ENCODE measurements at regions of chr22 and their contacts with region 1.

Region 1: DNA sequence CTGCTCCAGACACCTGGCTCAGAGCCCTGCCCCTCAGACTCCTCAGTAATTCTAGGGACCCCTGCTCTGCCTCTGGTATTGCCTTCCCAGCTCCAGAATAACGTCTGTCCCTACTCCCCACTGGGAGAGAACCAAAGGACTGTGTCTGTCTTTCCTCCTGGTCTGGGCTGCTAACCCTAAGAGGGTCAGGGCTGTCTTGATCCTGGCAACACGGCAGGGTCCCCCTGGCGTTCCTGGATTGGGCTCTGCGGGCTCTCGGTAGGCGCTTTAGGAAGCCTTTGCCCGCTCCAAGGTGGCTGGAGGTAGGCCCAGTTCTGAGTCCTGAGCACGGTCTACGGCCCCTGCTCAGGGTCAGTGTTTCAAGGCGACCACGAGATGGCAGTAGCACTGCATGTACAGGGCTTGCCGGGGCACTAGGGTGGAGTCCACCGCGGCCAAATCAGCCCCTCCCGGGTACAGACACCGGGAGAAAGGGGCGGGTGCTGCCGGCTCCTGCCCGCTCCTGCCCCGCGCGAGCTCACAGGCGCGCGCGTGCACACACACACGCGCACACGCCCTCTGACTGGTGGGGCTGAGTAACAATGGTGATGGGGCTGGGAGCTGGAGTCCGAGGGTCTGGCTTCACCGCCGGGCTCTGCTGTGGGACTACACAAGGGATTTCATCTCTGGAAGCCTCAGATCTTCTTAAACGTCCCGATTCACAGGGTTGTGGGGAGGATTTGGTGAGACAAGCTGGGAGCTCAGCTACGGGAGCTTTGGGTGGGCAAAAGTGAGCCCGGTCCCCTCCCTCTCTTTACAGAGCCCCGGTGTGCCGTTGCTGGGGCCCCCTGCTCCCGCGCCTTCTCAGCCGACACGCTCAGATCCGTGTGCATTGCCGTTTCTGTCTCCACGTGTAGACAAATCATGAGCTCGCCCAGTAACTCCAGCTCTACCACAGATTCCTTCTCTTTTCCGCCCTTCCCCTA is 30.1 kb upstream of the HMOX1 start:
- DNase-seq: peak; percentile 97
- ATAC-seq: peak; percentile 95
- H3K4me3 ChIP-seq: peak overlapping the region; percentile 21 to 30
- H3K27ac ChIP-seq: peak overlapping the region in 1 of 2 donors; percentile 23
- H3K4me1 ChIP-seq: no peaks in the 10 kb centered on the region
- H3K27me3 ChIP-seq: no peaks in the 10 kb centered on the region

Region 2: DNA sequence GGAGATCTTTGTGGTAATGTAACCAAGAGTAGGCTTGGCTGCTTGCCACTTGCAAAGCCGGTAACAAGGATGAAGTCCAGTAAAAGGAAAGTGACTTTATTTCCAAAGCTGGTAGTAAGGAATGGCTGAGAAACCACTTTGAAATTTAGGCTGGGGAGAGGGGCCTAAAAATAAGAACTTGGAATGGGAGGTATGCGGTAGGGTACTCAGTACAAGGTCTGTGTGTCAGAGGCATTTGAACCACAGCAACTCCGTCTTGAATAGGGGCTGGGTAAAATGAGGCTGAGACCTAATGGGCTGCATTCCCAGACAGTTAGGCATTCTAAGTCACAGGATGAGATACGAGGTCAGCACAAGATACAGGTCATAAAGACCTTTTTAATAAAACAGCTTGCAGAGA is 500.8 kb before region 1 on chr22:
- intact Hi-C with region 1: no loop called
- DNase-seq: no peak
- ATAC-seq: no peak
- H3K4me3 ChIP-seq: no peak overlapping the region
- H3K27ac ChIP-seq: no peak overlapping the region
- H3K4me1 ChIP-seq: no peaks in the 10 kb centered on the region
- H3K27me3 ChIP-seq: no peaks in the 10 kb centered on the region

Region 3: DNA sequence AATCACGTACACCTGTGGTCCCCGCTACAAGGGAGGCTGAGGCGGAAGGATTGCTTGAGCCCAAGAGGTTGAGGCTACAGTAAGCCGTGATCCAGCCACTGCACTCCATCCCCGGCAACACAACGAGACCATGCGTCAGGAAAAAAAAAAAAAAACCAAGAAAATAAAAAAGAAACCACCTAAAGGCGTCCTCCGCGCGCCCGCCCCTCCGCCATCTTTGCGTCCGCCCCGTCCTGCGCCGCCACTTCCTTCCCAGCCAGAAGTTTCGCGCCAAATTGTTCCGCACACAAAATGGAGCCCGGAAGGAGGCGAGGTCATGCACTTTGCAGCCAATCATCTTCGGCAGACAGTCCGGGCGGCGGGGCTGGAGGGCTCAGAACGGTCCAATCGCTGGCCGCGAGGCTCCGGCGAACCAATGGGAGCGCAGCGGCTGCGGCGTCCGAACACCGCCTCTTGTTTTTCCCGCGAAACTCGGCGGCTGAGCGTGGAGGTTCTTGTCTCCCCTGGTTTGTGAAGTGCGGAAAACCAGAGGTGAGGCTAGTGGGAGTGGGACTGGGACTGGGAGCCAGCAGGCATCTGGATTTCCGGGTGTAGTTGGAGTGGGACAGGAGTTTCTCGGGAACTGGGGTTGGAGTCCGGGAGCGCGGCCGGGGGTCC is 49.0 kb after region 1 on chr22 and contains the start of gene MCM5:
- intact Hi-C with region 1: loop called in 1 of 2 experiments (anchors 5 kb)
- DNase-seq: peak; percentile 98 to 99
- ATAC-seq: peak; percentile 97
- H3K4me3 ChIP-seq: peak within 1 kb of the TSS; percentile 70 to 81
- H3K27ac ChIP-seq: no peak within 1 kb of the TSS
- H3K4me1 ChIP-seq: no peaks in the 10 kb centered on the region
- H3K27me3 ChIP-seq: no peaks in the 10 kb centered on the region
- total RNA-seq, gene MCM5: 18.1 to 21.7 TPM

Region 4: DNA sequence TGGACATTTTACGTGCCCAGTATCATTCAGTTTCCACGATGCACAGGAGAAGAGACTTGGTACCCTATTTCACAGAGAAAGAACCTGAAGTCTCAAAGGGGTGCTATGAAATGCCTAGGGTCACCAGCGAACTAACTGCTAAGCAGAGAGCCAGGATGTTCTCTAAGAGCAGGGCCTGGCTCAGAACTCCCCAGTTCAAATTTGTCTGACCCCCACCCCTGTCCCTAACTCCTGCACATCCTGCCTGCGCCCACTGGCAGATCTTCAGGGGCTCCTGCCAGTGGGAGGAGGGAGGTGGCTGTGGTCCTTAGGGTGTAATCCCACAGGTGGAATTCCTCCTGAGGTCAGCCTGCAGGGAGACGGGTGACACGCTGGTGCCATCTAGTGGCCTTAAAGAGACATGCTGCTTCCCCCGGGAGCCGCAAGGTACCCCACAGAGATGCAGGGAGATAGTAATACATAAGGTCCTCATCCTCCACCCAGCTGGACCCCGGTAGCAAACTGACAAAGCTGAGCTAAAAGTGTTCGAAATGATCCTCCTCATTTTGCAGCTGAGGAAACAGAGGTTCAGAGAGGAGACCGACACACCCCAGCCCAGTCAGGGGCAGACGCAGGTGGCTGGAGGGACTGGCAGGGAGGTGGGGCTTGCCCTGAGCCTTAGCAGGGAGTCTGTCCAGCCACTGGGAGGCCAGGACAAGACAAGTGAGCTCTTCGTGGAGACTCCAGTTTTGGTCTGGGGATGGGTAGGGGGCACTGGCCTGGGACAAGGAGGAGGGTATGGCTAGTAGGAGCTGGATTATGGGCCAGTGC is 232.2 kb after region 1 on chr22:
- intact Hi-C with region 1: loop called (anchors 2 kb)
- DNase-seq: peak in 1 of 2 donors; percentile 58
- ATAC-seq: peak; percentile 80
- H3K4me3 ChIP-seq: no peak overlapping the region
- H3K27ac ChIP-seq: no peak overlapping the region
- H3K4me1 ChIP-seq: no peaks in the 10 kb centered on the region
- H3K27me3 ChIP-seq: no peaks in the 10 kb centered on the region

Region 5: GRCh38 chr22:35622191-35622913 is 271.5 kb after region 1 on chr22:
- intact Hi-C with region 1: loop called in 1 of 2 experiments (anchors 5 kb)
- DNase-seq: peak in 1 of 2 donors; percentile 70
- ATAC-seq: peak; percentile 28
- H3K4me3 ChIP-seq: no peak overlapping the region
- H3K27ac ChIP-seq: no peak overlapping the region
- H3K4me1 ChIP-seq: no peaks in the 10 kb centered on the region
- H3K27me3 ChIP-seq: no peaks in the 10 kb centered on the region

Measured in aorta (tissue), 5 donors.